ENCODE measurements at regions of chr18 and their contacts with region 1.

Region 1: DNA sequence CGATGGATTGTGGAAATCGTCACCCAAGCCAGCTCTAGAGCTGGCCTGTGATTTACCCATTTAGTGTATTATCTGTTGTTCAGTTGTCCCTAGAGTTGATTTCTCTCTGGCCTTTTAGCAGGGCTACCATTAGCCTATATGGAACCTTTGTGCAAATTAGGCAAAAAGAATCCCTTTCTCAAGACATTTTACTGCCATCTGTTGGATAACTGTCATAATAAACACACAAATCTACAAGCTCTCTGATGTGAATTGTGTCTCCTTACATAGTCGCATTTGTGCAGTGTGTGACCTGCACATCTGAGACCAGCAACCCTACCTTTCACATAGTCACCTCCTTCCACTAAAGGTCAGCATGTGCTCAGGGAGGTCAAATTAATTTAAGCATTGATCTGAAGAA is 34.0 kb downstream of the LOXHD1 start:
- DNase-seq: no peak
- H3K4me3 ChIP-seq: no peak overlapping the region
- H3K27ac ChIP-seq: no peak overlapping the region
- H3K4me1 ChIP-seq: no peaks in the 10 kb centered on the region
- H3K27me3 ChIP-seq: no peaks in the 10 kb centered on the region
- CTCF ChIP-seq: no peak
- POLR2A ChIP-seq: no peak

Region 2: GRCh38 chr18:46636040-46636630 is 13.1 kb after region 1 on chr18:
- intact Hi-C with region 1: no loop called
- DNase-seq: no peak
- H3K4me3 ChIP-seq: no peak overlapping the region
- H3K27ac ChIP-seq: no peak overlapping the region
- H3K4me1 ChIP-seq: no peaks in the 10 kb centered on the region
- H3K27me3 ChIP-seq: no peaks in the 10 kb centered on the region
- CTCF ChIP-seq: no peak
- POLR2A ChIP-seq: no peak

Region 3: DNA sequence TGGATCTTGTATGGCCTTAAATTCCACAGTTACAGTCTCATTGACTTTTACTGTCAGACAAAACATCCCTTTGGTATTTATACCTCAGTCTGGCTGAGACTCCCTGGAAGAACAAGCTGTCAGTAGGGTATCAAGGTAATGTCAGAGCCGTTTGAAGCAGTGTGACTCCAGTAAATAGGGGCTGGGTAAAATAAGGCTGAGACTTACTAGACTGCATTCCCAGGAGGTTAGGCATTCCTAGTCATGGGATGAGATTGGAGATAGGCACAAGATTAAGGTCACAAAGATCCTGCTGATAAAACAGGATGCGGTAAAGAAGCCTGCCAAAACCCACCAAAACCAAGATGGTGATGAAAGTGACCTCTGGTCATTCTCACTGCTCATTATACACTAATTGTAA is 847.9 kb after region 1 on chr18:
- intact Hi-C with region 1: loop called (anchors 5 kb)
- DNase-seq: no peak
- H3K4me3 ChIP-seq: no peak overlapping the region
- H3K27ac ChIP-seq: no peak overlapping the region
- H3K4me1 ChIP-seq: no peaks in the 10 kb centered on the region
- H3K27me3 ChIP-seq: no peaks in the 10 kb centered on the region
- CTCF ChIP-seq: no peak
- POLR2A ChIP-seq: no peak

Measured in breast epithelium (tissue), 4 donors.